Heart left ventricle (tissue), 16 donors: ENCODE measurements at regions of chr5 and their contacts with region 1.

Region 1: DNA sequence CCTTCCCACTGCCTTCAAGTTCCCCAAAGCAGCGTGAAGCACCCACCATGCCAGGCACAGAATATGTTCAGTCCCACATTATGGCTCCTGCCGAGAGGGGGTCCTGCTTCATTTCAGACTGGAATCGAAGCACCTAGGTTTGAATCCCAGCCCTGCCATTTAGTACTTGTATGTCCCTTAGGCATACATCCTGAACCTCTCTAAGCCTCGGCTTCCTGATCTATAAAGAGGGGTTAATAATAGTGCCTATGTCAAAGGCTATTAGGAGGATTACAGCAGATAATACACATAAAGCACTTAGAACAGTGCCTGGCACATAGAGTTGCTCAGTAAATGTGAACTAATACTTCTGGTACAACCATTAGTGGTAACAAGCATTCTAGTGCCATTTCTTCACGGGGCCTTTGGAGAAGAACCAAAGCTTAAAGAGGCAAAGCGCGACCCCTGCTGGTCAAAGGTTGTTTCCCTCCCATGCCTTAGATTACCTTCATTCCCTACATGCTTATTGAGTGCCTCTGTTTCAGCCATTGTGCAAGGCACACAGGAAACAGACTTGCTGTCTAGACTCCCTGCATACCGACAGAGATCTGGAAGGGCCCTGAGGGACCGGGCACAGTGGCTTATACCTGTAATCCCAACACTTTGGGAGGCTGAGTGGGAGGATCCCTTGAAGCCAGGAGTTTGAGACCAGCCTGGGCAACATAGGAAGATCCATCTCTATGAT is 98.2 kb downstream of the PPARGC1B start:
- DNase-seq: peak; percentile 83 to 90 (median 86)
- ATAC-seq: peak; percentile 43 to 75 (median 62)
- H3K4me3 ChIP-seq: no peak overlapping the region
- H3K27ac ChIP-seq: peak overlapping the region in 11 of 12 donors; percentile 57 to 92 (median 84)
- H3K4me1 ChIP-seq: peaks cover 21 to 66% (median 50%) of the 10 kb centered on the region in 12 donors
- H3K27me3 ChIP-seq: no peaks in the 10 kb centered on the region
- CTCF ChIP-seq: peak; percentile 83 to 95 (median 90)
- POLR2A ChIP-seq: no peak

Region 2: GRCh38 chr5:149656576-149657182 is 171.6 kb before region 1 on chr5:
- intact Hi-C with region 1: loop called in 7 of 10 experiments (anchors 1 to 5 kb)
- DNase-seq: peak in 3 of 5 donors; percentile 49 to 61 (median 49)
- ATAC-seq: peak in 3 of 4 donors; percentile 33 to 51 (median 47)
- H3K4me3 ChIP-seq: no peak overlapping the region
- H3K27ac ChIP-seq: peak overlapping the region in 7 of 12 donors; percentile 33 to 84 (median 80)
- H3K4me1 ChIP-seq: peaks cover 0 to 32% (median 6%) of the 10 kb centered on the region in 12 donors
- H3K27me3 ChIP-seq: no peaks in the 10 kb centered on the region
- CTCF ChIP-seq: peak; percentile 60 to 77 (median 68)
- POLR2A ChIP-seq: no peak

Region 3: GRCh38 chr5:149731639-149732323 is 96.5 kb before region 1 on chr5:
- intact Hi-C with region 1: loop called in 9 of 10 experiments (anchors 1 to 5 kb)
- DNase-seq: peak; percentile 90 to 93 (median 91)
- ATAC-seq: peak; percentile 32 to 76 (median 71)
- H3K4me3 ChIP-seq: peak overlapping the region; percentile 65 to 99 (median 90)
- H3K27ac ChIP-seq: peak overlapping the region; percentile 83 to 98 (median 94)
- H3K4me1 ChIP-seq: peaks cover 0 to 40% (median 8%) of the 10 kb centered on the region in 12 donors
- H3K27me3 ChIP-seq: no peaks in the 10 kb centered on the region
- CTCF ChIP-seq: peak in 4 of 12 donors; percentile 15 to 32 (median 22)
- POLR2A ChIP-seq: peak; percentile 23 to 80

Region 4: DNA sequence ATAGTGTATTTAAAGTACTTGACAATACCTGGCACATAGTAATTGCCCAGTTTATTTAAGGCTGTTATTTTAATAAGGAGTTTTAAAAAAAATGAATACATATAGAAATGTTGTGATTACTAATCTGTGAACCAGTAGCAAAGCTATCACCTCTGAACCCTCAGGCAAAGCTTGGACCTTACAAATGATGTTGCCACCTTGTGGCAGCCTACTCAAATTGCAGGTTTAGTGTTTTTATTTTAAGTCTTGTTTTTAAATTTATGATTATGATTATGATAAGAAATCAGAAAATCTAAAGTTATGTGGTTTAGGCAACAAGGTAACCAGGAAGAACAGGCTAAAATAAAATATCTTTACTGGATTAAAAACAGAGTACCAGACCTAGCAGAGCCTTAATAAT is 62.4 kb before region 1 on chr5:
- intact Hi-C with region 1: loop called in 6 of 10 experiments (anchors 2 to 10 kb)
- DNase-seq: no peak
- ATAC-seq: no peak
- H3K4me3 ChIP-seq: no peak overlapping the region
- H3K27ac ChIP-seq: peak overlapping the region in 7 of 12 donors; percentile 36 to 68 (median 60)
- H3K4me1 ChIP-seq: peaks cover 0 to 82% (median 24%) of the 10 kb centered on the region in 12 donors
- H3K27me3 ChIP-seq: no peaks in the 10 kb centered on the region
- CTCF ChIP-seq: peak in 8 of 12 donors; percentile 9 to 39 (median 26)
- POLR2A ChIP-seq: no peak

Region 5: DNA sequence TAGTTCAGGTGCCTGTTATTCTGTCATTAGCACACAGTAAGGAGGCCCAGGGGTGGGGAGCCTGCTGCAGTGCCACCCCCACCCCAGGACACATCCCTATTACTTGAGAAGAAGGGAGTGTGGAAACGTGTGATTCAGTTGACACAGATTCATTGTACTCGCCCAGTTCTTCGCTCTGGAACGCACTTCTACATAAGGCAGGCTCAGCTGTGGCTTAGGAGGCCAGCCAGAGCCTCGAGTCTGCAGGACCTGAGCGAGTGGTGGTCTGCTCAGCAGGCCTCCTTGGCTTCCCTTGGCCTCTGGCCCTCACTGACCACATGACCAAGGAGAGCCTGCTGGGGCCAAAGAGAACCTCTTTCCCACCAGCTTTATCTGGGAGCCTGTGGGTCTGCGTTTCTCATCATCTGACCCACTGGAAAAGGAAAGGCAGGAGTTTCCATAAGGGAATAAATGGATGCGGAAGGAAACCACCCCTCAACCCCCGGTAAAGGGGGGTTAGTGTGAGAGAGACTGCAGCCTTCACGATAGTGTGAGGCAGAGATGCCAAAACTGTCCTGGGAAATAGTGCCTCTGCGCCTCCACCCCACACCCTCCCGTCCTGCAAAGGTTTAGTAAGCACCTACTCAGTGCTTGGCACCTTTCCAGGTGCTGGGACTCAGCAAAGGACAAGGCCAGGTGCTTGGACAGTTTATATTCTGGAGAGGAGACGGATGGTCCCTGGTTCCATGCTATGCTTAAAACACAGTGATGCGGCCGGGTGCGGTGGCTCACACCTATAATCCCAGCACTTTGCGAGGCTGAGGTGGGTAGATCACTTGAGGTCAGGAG is 24.5 kb before region 1 on chr5:
- intact Hi-C with region 1: loop called in 1 of 10 experiments (anchors 2 kb)
- DNase-seq: peak; percentile 59 to 80 (median 72)
- ATAC-seq: peak in 2 of 4 donors; percentile 2 to 18
- H3K4me3 ChIP-seq: no peak overlapping the region
- H3K27ac ChIP-seq: peak overlapping the region; percentile 43 to 94 (median 88)
- H3K4me1 ChIP-seq: peaks cover 28 to 100% (median 91%) of the 10 kb centered on the region in 12 donors
- H3K27me3 ChIP-seq: no peaks in the 10 kb centered on the region
- CTCF ChIP-seq: no peak
- POLR2A ChIP-seq: peak in 1 of 2 donors; percentile 9

Region 6: GRCh38 chr5:150000256-150000989 is 172.1 kb after region 1 on chr5 and contains the starts of genes HMGXB3 and TIGD6:
- intact Hi-C with region 1: no loop called
- DNase-seq: peak; percentile 93 to 97 (median 96)
- ATAC-seq: peak; percentile 95 to 97 (median 97)
- H3K4me3 ChIP-seq: peak within 1 kb of the TSS; percentile 62 to 100 (median 92)
- H3K27ac ChIP-seq: peak within 1 kb of the TSS; percentile 72 to 98 (median 88)
- H3K4me1 ChIP-seq: peaks cover 0 to 41% (median 27%) of the 10 kb centered on the region in 12 donors
- H3K27me3 ChIP-seq: no peaks in the 10 kb centered on the region
- CTCF ChIP-seq: peak in 5 of 12 donors; percentile 11 to 38 (median 13)
- POLR2A ChIP-seq: peak; percentile 2 to 80
- total RNA-seq, gene HMGXB3: 12.4 to 25.9 (median 17.5) TPM
- total RNA-seq, gene TIGD6: 1.3 to 4.3 (median 2.6) TPM